Naive thymus-derived CD4-positive, alpha-beta T cell (primary cell): ENCODE measurements at regions of chr13 and their contacts with region 1.

Region 1: GRCh38 chr13:48562296-48563066 is 29.6 kb upstream of the RCBTB2 start:
- DNase-seq: peak in 8 of 9 donors; percentile 67 to 87 (median 79)
- ATAC-seq: peak; percentile 100
- H3K4me3 ChIP-seq: peak overlapping the region; percentile 12
- H3K4me3 Mint-ChIP-seq: peak overlapping the region in 9 of 10 donors; percentile 0 to 68 (median 54)
- H3K27ac ChIP-seq: no peak overlapping the region
- H3K27ac Mint-ChIP-seq: peak overlapping the region in 2 of 9 donors; percentile 71 to 82
- H3K4me1 ChIP-seq: peaks cover 22 to 31% of the 10 kb centered on the region in 2 donors
- H3K4me1 Mint-ChIP-seq: peaks cover 28 to 51% (median 36%) of the 10 kb centered on the region in 7 donors
- H3K27me3 ChIP-seq: no peaks in the 10 kb centered on the region
- H3K27me3 Mint-ChIP-seq: peaks cover 7 to 67% (median 13%) of the 10 kb centered on the region in 5 donors

Region 2: DNA sequence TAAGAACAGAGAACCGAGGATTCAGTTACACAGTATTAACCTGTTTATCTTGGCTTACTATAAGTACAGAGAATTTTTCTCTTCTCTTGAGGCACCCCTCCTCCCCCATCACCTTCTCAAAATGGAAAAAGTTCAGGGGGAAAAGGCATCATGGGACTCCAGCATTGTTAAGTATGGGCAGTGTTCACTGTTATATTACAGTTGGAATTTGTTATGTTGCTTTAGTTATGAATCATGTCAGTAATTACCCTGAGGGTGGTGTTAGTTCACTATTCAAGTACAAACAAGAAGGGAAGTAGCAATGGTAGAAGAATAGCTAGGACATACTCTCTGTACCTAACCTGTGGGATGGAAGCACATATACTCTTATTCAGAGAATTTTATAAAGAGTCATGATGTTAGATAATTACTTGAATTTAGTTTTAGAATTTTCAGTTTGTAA is 161.6 kb before region 1 on chr13:
- CTCF ChIA-PET with region 1: interaction called, 5 read pairs
- POLR2A ChIA-PET with region 1: interaction called, 5 read pairs
- intact Hi-C with region 1: loop called in 1 of 2 experiments (anchors 1 kb)
- DNase-seq: peak in 2 of 9 donors; percentile 36 to 42
- ATAC-seq: peak; percentile 74
- H3K4me3 ChIP-seq: no peak overlapping the region
- H3K4me3 Mint-ChIP-seq: peak overlapping the region; percentile 1 to 83 (median 54)
- H3K27ac ChIP-seq: peak overlapping the region; percentile 49
- H3K27ac Mint-ChIP-seq: peak overlapping the region; percentile 1 to 90 (median 50)
- H3K4me1 ChIP-seq: peaks cover 33 to 40% of the 10 kb centered on the region in 2 donors
- H3K4me1 Mint-ChIP-seq: peaks cover 23 to 78% (median 63%) of the 10 kb centered on the region in 7 donors
- H3K27me3 ChIP-seq: no peaks in the 10 kb centered on the region
- H3K27me3 Mint-ChIP-seq: no peaks in the 10 kb centered on the region

Region 3: GRCh38 chr13:48492470-48493065 is 69.9 kb before region 1 on chr13:
- CTCF ChIA-PET with region 1: no interaction called
- POLR2A ChIA-PET with region 1: interaction called, 10 read pairs
- intact Hi-C with region 1: loop called (anchors 1 kb)
- DNase-seq: peak; percentile 38 to 79 (median 74)
- ATAC-seq: peak; percentile 91
- H3K4me3 ChIP-seq: peak overlapping the region; percentile 73
- H3K4me3 Mint-ChIP-seq: no peak overlapping the region
- H3K27ac ChIP-seq: peak overlapping the region; percentile 74
- H3K27ac Mint-ChIP-seq: no peak overlapping the region
- H3K4me1 ChIP-seq: peaks cover 67% of the 10 kb centered on the region in 2 donors
- H3K4me1 Mint-ChIP-seq: peaks cover 1 to 55% (median 34%) of the 10 kb centered on the region in 7 donors
- H3K27me3 ChIP-seq: no peaks in the 10 kb centered on the region
- H3K27me3 Mint-ChIP-seq: no peaks in the 10 kb centered on the region

Region 4: GRCh38 chr13:48515732-48516131 is 46.7 kb before region 1 on chr13:
- CTCF ChIA-PET with region 1: no interaction called
- POLR2A ChIA-PET with region 1: no interaction called
- intact Hi-C with region 1: loop called in 1 of 2 experiments (anchors 5 kb)
- DNase-seq: no peak
- ATAC-seq: no peak
- H3K4me3 ChIP-seq: no peak overlapping the region
- H3K4me3 Mint-ChIP-seq: no peak overlapping the region
- H3K27ac ChIP-seq: no peak overlapping the region
- H3K27ac Mint-ChIP-seq: no peak overlapping the region
- H3K4me1 ChIP-seq: peaks cover 0 to under 1% of the 10 kb centered on the region in 2 donors
- H3K4me1 Mint-ChIP-seq: peaks cover 0 to 5% (median 1%) of the 10 kb centered on the region in 7 donors
- H3K27me3 ChIP-seq: no peaks in the 10 kb centered on the region
- H3K27me3 Mint-ChIP-seq: peaks cover 0 to 21% (median 0%) of the 10 kb centered on the region in 5 donors

Region 5: GRCh38 chr13:48783181-48783630 is 220.7 kb after region 1 on chr13:
- CTCF ChIA-PET with region 1: no interaction called
- POLR2A ChIA-PET with region 1: no interaction called
- intact Hi-C with region 1: no loop called
- DNase-seq: peak in 1 of 9 donors; percentile 20
- ATAC-seq: peak; percentile 90
- H3K4me3 ChIP-seq: no peak overlapping the region
- H3K4me3 Mint-ChIP-seq: no peak overlapping the region
- H3K27ac ChIP-seq: no peak overlapping the region
- H3K27ac Mint-ChIP-seq: no peak overlapping the region
- H3K4me1 ChIP-seq: no peaks in the 10 kb centered on the region
- H3K4me1 Mint-ChIP-seq: peaks cover 0 to 1% (median 0%) of the 10 kb centered on the region in 7 donors
- H3K27me3 ChIP-seq: no peaks in the 10 kb centered on the region
- H3K27me3 Mint-ChIP-seq: peaks cover 0 to 12% (median 6%) of the 10 kb centered on the region in 5 donors